Mammary epithelial cell (primary cell): ENCODE measurements at regions of chr9 and their contacts with region 1.

Region 1: DNA sequence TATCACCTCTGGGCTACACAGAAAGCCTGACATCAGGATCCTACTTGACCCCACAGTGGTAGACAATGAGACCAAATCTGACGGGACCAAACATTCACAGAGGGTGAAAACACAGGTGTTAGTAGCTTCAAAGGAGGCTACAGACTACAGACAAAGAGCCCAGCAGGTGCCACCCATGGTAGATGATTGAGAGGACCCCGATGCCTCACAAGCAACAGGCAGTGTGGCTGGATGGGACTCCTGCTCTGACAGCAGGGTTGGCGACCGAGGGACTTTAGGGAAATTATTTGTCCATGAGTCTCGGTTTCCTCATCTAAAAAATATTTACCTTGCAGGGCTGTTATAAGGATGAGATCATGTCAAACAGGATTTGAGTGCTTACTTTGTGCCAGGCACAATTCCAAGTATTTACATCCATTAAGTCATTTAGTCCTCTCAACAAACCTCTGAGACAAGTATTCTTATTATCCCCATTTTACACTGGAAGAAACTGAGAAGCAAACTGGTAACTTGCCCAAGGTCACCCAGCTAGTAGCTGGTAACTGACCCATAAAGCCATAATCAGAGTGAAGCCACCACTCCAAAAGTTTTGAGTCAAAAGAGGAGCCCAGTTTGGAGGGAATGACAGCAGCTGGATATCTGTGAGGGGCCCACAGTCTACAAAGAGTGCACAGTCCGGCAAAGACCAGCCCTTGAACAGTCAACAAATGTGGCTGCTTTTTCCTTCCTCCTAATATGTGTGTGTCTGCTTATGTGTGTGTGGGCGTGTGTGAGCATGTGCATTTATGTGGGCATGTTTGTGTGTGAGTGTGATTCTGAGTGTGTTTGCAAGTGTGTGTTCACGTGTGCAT is 502.0 kb downstream of the BNC2 start:
- DNase-seq: peak; percentile 58
- H3K4me3 ChIP-seq: no peak overlapping the region
- H3K27ac ChIP-seq: no peak overlapping the region
- H3K4me1 ChIP-seq: peaks cover 5% of the 10 kb centered on the region
- H3K27me3 ChIP-seq: no peaks in the 10 kb centered on the region
- CTCF ChIP-seq: no peak

Region 2: GRCh38 chr9:16257604-16258003 is 110.9 kb before region 1 on chr9:
- CTCF ChIA-PET with region 1: no interaction called
- dilution Hi-C with region 1: loop called (anchors 5 kb)
- in situ Hi-C with region 1: no loop called
- intact Hi-C with region 1: no loop called
- DNase-seq: no peak
- H3K4me3 ChIP-seq: no peak overlapping the region
- H3K27ac ChIP-seq: no peak overlapping the region
- H3K4me1 ChIP-seq: no peaks in the 10 kb centered on the region
- H3K27me3 ChIP-seq: no peaks in the 10 kb centered on the region
- CTCF ChIP-seq: peak; percentile 56 to 77

Region 3: GRCh38 chr9:16321461-16322119 is 46.9 kb before region 1 on chr9:
- CTCF ChIA-PET with region 1: no interaction called
- dilution Hi-C with region 1: loop called (anchors 5 kb)
- in situ Hi-C with region 1: no loop called
- intact Hi-C with region 1: no loop called
- DNase-seq: peak; percentile 67
- H3K4me3 ChIP-seq: no peak overlapping the region
- H3K27ac ChIP-seq: no peak overlapping the region
- H3K4me1 ChIP-seq: peaks cover 6% of the 10 kb centered on the region
- H3K27me3 ChIP-seq: no peaks in the 10 kb centered on the region
- CTCF ChIP-seq: no peak

Region 4: DNA sequence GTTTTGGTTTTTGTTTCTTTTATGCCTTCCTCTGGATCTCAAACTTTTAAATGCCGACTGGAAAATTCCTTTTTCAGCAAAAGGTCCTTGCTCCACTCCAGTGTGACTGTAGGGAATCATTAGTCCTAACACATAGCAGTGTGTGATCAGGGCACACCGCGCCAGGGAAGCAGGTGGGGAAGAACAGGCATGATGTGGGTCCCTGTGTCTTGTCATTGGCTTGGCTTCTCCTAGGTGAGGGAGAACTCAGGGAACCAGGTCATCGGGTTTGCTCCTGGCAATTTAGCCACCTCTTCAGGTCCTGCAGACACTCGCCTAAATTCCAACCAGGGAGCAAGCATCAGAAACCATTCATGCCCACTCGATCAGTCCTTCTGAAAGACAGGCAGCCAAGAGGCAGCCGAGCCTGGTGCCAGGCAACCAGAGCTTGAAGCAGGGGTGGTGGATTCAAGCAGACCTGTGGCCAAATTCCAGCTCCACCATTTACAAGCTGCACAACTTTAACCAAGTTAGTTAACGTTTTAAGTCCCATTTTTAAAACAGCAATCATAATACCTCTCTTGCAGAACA is 12.2 kb before region 1 on chr9:
- CTCF ChIA-PET with region 1: no interaction called
- dilution Hi-C with region 1: no loop called
- in situ Hi-C with region 1: no loop called
- intact Hi-C with region 1: loop called (anchors 1 kb)
- DNase-seq: no peak
- H3K4me3 ChIP-seq: no peak overlapping the region
- H3K27ac ChIP-seq: no peak overlapping the region
- H3K4me1 ChIP-seq: no peaks in the 10 kb centered on the region
- H3K27me3 ChIP-seq: no peaks in the 10 kb centered on the region
- CTCF ChIP-seq: no peak